ENCODE measurements at regions of chr1 and their contacts with region 1.

Region 1: GRCh38 chr1:225777583-225778336 is at the start of gene SRP9:
- DNase-seq: peak; percentile 99
- ATAC-seq: peak; percentile 98 to 100 (median 99)
- H3K4me3 ChIP-seq: peak within 1 kb of the TSS; percentile 66 to 80 (median 69)
- H3K27ac ChIP-seq: peak within 1 kb of the TSS; percentile 73 to 96 (median 75)
- H3K4me1 ChIP-seq: peaks cover 0 to 34% (median 8%) of the 10 kb centered on the region in 4 donors
- H3K27me3 ChIP-seq: no peaks in the 10 kb centered on the region
- CTCF ChIP-seq: peak; percentile 89 to 94 (median 91)
- POLR2A ChIP-seq: peak; percentile 77
- total RNA-seq, gene SRP9: 132 to 150 (median 141) TPM

Region 2: GRCh38 chr1:225567590-225568194 is 210.1 kb before region 1 on chr1:
- intact Hi-C with region 1: loop called in 1 of 2 experiments (anchors 10 kb)
- DNase-seq: no peak
- ATAC-seq: no peak
- H3K4me3 ChIP-seq: no peak overlapping the region
- H3K27ac ChIP-seq: no peak overlapping the region
- H3K4me1 ChIP-seq: no peaks in the 10 kb centered on the region
- H3K27me3 ChIP-seq: no peaks in the 10 kb centered on the region
- CTCF ChIP-seq: peak in 1 of 4 donors; percentile 20
- POLR2A ChIP-seq: no peak

Region 3: DNA sequence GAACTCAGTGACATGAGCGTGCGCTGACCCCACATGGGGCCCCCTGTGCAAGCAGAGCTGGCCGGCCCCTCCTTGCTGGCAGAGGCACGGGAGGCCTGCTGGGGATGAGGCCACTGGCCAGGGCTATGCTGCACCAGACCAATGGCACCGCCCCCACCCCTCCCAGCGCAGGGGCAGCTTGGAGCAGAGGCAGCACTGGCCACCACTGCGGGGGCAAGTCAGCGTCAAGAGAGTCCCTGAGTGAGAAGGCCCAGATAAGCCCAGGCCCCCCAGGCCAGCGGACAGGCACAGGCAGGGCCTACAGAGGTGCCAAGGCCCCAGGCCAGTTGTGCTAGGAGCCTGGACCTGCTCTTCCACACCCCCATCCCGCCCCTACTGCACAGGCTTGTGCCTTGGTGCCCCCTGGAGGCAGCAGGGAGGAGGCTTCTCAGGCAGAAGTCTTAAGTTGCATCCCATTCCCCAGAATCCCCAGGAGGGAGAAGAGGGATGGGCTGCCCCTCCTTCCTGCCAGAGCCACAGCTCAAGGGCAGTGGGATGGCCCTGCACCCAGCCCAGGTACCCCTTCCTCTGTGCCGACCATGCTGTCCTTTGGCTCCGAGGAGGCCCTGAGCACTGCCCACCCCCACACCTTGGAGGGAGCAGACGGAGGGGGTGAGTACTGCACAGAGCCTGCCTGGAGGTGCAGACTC is 68.0 kb after region 1 on chr1:
- intact Hi-C with region 1: loop called in 1 of 2 experiments (anchors 10 kb)
- DNase-seq: peak; percentile 77 to 85 (median 83)
- ATAC-seq: peak; percentile 35 to 70 (median 68)
- H3K4me3 ChIP-seq: no peak overlapping the region
- H3K27ac ChIP-seq: peak overlapping the region in 1 of 3 donors; percentile 4
- H3K4me1 ChIP-seq: no peaks in the 10 kb centered on the region
- H3K27me3 ChIP-seq: no peaks in the 10 kb centered on the region
- CTCF ChIP-seq: peak; percentile 56 to 73 (median 60)
- POLR2A ChIP-seq: no peak

Region 4: DNA sequence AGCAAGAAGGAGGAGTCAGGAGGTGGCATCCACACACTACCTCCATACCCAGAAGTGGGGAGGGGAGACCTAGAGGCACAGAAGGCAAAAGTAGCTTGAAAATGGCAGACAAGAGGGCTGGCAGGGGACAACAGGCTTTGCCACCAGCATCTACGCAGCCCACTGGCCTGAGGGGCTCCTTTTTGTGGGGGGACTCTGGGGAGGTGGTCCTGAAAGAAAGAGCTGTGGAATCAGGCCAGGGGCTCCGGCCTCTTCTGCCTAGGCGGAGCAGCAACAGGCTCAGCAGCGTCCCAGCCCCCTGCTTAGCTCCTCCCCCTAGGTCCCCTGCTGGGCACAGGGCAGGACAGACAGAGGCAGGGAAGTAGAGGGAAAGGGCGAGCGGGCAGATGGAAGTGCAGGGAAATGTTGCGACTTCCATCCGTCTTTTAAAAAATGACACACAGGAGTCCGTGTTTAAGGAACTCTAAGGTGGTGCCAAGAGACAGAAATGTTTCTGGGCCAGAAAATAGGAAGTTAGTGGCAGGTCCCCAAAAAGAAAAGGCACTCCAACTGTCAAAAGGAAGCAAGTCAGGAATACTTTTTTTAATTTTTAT is 173.2 kb after region 1 on chr1:
- intact Hi-C with region 1: no loop called
- DNase-seq: no peak
- ATAC-seq: peak in 1 of 4 donors; percentile 34
- H3K4me3 ChIP-seq: no peak overlapping the region
- H3K27ac ChIP-seq: no peak overlapping the region
- H3K4me1 ChIP-seq: no peaks in the 10 kb centered on the region
- H3K27me3 ChIP-seq: no peaks in the 10 kb centered on the region
- CTCF ChIP-seq: no peak
- POLR2A ChIP-seq: no peak

Measured in right lobe of liver (tissue), 6 donors.